Cardiac septum (tissue), 1 donor: ENCODE measurements at regions of chr11 and their contacts with region 1.

Region 1: DNA sequence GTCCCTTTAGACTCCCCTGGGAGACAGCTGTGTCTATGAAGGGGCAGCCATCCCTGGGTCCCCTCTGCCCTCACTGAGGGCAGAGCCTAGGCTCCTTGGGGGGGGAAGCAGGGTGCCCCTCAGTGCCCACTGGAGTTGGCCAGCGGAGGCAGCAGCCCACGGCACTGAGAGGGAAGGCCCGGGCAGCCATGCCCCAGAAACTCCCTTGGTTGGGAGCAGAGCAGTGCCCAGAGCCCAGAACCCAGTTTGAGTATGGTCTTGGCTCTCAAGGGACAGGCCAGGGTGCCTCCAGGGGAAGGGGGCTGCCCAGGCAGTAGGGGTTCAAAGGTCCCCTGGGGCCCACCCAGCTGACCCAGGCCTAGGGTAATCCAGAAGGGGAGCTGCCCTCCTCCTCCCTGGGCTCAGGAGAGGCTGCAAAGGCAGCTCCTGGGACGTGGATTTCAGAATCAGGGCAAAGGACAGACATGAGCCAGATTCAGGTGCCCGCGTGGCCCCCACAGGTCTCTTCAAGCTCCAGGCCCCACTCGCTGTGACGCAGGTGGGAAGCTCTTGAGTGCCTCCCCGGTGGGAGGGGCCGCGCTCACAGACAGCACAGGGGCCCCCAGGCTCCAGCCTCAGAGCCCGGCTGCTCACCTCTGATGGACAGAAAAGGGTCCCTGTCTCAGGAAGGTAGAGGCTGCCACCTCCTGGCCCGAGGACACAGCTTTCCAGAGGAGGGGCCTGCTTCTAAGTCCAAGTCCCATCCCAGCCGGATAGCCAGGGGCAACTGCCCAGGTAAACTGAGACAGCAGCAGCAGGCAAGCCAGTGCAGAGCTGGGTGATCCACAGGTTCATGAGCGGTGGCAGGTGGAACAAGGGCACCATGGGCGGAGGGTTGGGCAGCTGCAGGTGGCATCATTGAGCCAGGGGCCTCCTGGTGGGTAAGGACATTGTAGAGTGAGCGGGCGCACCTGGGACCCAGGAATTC is 2.6 kb downstream of the C11orf21 start:
- DNase-seq: peak; percentile 74

Region 2: GRCh38 chr11:2459796-2460531 is 160.9 kb after region 1 on chr11:
- intact Hi-C with region 1: loop called (anchors 2 kb)
- DNase-seq: peak; percentile 67

Region 3: DNA sequence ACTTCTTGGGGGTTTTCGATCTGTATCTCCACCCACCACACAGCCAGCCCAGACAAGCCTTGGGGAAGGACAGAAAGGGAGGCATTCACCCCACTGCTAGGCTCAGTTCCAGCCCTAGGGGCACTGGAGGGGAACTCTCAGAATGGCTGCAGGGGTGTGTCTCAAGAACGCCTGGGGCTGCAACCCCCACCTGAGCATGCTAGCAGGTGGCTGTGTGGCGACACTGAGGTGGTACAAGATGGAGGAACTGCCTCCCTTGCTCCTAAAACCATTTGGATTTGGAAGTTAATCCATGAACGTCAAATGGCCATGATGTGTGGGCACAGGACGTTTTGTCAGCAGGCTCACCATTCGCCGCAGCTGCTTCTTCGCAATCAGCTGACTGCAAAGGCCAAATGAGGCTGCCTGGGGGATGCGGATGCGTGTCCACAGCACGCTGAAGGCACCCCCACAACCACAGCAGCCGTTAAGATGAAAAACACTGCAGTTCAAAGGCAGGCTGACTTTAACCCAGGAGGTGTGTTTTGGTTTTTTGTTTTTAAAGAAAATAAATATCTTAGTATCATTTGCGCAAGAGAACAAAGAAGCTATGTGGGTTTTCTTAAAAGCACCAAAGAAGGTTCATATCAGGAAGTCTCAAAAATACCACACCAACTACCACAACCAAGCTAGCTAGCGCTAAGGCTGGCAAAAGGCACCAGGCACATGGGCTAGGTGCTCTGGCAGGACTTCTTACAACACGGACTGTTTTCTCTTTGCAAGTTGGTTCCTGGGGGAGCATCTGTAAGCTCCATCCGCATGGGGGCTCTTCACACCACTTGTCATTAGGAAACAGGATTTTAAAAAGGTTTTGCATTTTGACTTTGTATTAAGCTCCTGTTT is 715.2 kb after region 1 on chr11:
- intact Hi-C with region 1: no loop called
- DNase-seq: no peak